ENCODE measurements at regions of chr19 and their contacts with region 1.

Region 1: GRCh38 chr19:2084993-2085720 is 11.0 kb downstream of the MOB3A start:
- DNase-seq: peak; percentile 68 to 97 (median 95)
- ATAC-seq: peak; percentile 86
- H3K4me3 ChIP-seq: peak overlapping the region; percentile 98
- H3K4me3 Mint-ChIP-seq: peak overlapping the region; percentile 87 to 99 (median 95)
- H3K27ac ChIP-seq: peak overlapping the region; percentile 99
- H3K27ac Mint-ChIP-seq: peak overlapping the region; percentile 92 to 99 (median 96)
- H3K4me1 ChIP-seq: peaks cover 65 to 72% of the 10 kb centered on the region in 2 donors
- H3K4me1 Mint-ChIP-seq: peaks cover 48 to 76% (median 68%) of the 10 kb centered on the region in 7 donors
- H3K27me3 ChIP-seq: no peaks in the 10 kb centered on the region
- H3K27me3 Mint-ChIP-seq: peaks cover 0 to 2% (median 0%) of the 10 kb centered on the region in 5 donors

Region 2: DNA sequence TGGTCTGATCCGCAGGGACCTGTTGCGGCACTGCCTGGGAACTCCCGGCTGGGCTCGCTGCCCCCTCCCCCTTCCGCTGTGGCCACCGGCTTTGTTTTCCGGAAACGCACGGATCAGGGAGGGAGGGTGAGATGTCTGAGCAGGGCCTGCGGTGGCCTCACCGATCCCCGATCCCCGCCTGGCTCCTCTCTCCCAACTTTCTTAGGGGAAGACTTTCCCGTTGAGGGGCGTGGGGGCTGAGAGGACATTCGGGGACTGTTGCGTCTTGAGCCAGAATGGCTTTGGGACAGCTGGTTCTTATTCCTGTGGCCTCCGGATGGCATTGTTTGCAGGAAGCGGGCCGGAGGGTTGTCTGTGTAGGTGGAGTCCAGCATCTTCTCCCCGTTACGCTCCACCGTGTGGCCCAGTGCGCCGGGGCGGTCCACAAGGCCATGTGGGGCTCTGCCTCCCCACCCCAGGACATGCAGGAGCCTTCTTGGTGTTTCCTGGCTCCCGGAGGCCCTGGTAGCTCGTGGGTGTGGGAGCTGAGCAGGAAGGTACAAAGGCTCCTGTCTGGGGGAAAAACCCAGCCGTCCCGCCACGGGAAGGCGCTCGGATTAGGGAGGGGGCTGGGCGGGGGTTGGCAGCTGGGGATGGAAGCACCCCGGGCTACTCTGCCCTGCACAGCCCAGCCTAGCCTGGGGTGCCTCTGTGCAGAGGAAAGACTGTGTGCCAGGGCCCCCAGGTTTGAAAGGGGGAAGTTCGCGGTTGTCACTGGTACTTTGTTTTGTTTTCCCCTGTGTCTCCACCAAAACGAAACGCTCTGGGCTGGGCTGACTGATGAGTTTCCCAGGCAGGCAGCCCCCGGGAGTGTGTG is 142.9 kb before region 1 on chr19:
- CTCF ChIA-PET with region 1: no interaction called
- POLR2A ChIA-PET with region 1: interaction called, 3 read pairs
- intact Hi-C with region 1: loop called in 1 of 2 experiments (anchors 1 kb)
- DNase-seq: peak; percentile 58 to 84 (median 78)
- ATAC-seq: peak; percentile 51
- H3K4me3 ChIP-seq: peak overlapping the region; percentile 94
- H3K4me3 Mint-ChIP-seq: peak overlapping the region; percentile 91 to 100 (median 96)
- H3K27ac ChIP-seq: peak overlapping the region; percentile 98
- H3K27ac Mint-ChIP-seq: peak overlapping the region; percentile 90 to 99 (median 97)
- H3K4me1 ChIP-seq: peaks cover 21 to 30% of the 10 kb centered on the region in 2 donors
- H3K4me1 Mint-ChIP-seq: peaks cover 22 to 44% (median 30%) of the 10 kb centered on the region in 7 donors
- H3K27me3 ChIP-seq: no peaks in the 10 kb centered on the region
- H3K27me3 Mint-ChIP-seq: peaks cover 0 to 2% (median 0%) of the 10 kb centered on the region in 5 donors

Region 3: GRCh38 chr19:1979670-1980069 is 105.5 kb before region 1 on chr19:
- CTCF ChIA-PET with region 1: no interaction called
- POLR2A ChIA-PET with region 1: no interaction called
- intact Hi-C with region 1: no loop called
- DNase-seq: no peak
- ATAC-seq: no peak
- H3K4me3 ChIP-seq: no peak overlapping the region
- H3K4me3 Mint-ChIP-seq: no peak overlapping the region
- H3K27ac ChIP-seq: no peak overlapping the region
- H3K27ac Mint-ChIP-seq: no peak overlapping the region
- H3K4me1 ChIP-seq: no peaks in the 10 kb centered on the region
- H3K4me1 Mint-ChIP-seq: peaks cover 0 to 4% (median 0%) of the 10 kb centered on the region in 7 donors
- H3K27me3 ChIP-seq: no peaks in the 10 kb centered on the region
- H3K27me3 Mint-ChIP-seq: no peaks in the 10 kb centered on the region

Region 4: DNA sequence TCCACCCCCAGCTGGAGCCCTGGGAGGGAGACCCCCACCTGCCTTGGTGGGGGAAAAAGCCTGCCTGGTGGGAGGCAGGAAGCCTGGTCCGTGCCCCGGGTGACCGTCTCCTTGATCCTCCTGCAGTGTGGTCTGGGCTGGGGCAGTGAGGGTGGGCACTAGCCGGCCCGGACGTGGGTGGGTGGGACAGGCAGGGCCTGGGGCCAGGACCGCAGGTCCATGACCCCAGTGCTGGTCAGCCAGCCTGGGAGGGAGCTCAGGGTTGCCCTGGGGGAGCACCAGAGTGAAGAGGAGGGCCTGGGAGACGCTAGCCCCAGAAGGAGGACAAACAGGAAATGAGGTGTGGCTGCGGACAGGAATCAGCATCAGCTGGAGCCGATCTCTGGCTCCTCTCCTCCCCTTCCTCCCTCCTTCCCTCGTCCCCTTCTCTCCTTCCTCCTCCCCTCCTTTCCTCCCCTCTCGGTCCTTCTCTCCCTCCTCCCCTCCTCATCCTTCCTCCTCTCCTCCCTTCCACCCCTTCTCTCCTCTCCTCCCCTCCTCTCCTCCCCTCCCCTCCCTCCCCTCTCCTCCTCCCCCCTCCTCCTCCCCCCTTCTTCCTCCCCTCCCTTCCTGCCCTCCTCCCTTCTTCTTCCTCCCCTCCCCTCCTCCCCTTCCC is 28.8 kb before region 1 on chr19:
- CTCF ChIA-PET with region 1: interaction called, 6 read pairs
- POLR2A ChIA-PET with region 1: interaction called, 39 read pairs
- intact Hi-C with region 1: loop called (anchors 1 kb)
- DNase-seq: no peak
- ATAC-seq: no peak
- H3K4me3 ChIP-seq: no peak overlapping the region
- H3K4me3 Mint-ChIP-seq: peak overlapping the region in 9 of 10 donors; percentile 49 to 83 (median 74)
- H3K27ac ChIP-seq: peak overlapping the region; percentile 99
- H3K27ac Mint-ChIP-seq: peak overlapping the region; percentile 25 to 94 (median 89)
- H3K4me1 ChIP-seq: peaks cover 45 to 67% of the 10 kb centered on the region in 2 donors
- H3K4me1 Mint-ChIP-seq: peaks cover 23 to 70% (median 40%) of the 10 kb centered on the region in 7 donors
- H3K27me3 ChIP-seq: no peaks in the 10 kb centered on the region
- H3K27me3 Mint-ChIP-seq: no peaks in the 10 kb centered on the region

Region 5: GRCh38 chr19:2061495-2062381 is 23.4 kb before region 1 on chr19:
- CTCF ChIA-PET with region 1: interaction called, 3 read pairs
- POLR2A ChIA-PET with region 1: interaction called, 18 read pairs
- intact Hi-C with region 1: loop called (anchors 1 kb)
- DNase-seq: peak; percentile 99 to 100 (median 100)
- ATAC-seq: peak; percentile 94
- H3K4me3 ChIP-seq: peak overlapping the region; percentile 72
- H3K4me3 Mint-ChIP-seq: peak overlapping the region; percentile 91 to 97 (median 94)
- H3K27ac ChIP-seq: peak overlapping the region; percentile 99
- H3K27ac Mint-ChIP-seq: peak overlapping the region; percentile 85 to 99 (median 97)
- H3K4me1 ChIP-seq: peaks cover 32 to 49% of the 10 kb centered on the region in 2 donors
- H3K4me1 Mint-ChIP-seq: peaks cover 20 to 60% (median 24%) of the 10 kb centered on the region in 7 donors
- H3K27me3 ChIP-seq: no peaks in the 10 kb centered on the region
- H3K27me3 Mint-ChIP-seq: no peaks in the 10 kb centered on the region

Region 6: GRCh38 chr19:2070436-2070827 is 14.7 kb before region 1 on chr19:
- CTCF ChIA-PET with region 1: interaction called, 5 read pairs
- POLR2A ChIA-PET with region 1: interaction called, 13 read pairs
- intact Hi-C with region 1: loop called in 1 of 2 experiments (anchors 1 kb)
- DNase-seq: no peak
- ATAC-seq: no peak
- H3K4me3 ChIP-seq: no peak overlapping the region
- H3K4me3 Mint-ChIP-seq: no peak overlapping the region
- H3K27ac ChIP-seq: peak overlapping the region; percentile 53
- H3K27ac Mint-ChIP-seq: peak overlapping the region in 6 of 9 donors; percentile 59 to 88 (median 80)
- H3K4me1 ChIP-seq: peaks cover 0 to 10% of the 10 kb centered on the region in 2 donors
- H3K4me1 Mint-ChIP-seq: peaks cover 13 to 38% (median 22%) of the 10 kb centered on the region in 7 donors
- H3K27me3 ChIP-seq: no peaks in the 10 kb centered on the region
- H3K27me3 Mint-ChIP-seq: no peaks in the 10 kb centered on the region

Region 7: DNA sequence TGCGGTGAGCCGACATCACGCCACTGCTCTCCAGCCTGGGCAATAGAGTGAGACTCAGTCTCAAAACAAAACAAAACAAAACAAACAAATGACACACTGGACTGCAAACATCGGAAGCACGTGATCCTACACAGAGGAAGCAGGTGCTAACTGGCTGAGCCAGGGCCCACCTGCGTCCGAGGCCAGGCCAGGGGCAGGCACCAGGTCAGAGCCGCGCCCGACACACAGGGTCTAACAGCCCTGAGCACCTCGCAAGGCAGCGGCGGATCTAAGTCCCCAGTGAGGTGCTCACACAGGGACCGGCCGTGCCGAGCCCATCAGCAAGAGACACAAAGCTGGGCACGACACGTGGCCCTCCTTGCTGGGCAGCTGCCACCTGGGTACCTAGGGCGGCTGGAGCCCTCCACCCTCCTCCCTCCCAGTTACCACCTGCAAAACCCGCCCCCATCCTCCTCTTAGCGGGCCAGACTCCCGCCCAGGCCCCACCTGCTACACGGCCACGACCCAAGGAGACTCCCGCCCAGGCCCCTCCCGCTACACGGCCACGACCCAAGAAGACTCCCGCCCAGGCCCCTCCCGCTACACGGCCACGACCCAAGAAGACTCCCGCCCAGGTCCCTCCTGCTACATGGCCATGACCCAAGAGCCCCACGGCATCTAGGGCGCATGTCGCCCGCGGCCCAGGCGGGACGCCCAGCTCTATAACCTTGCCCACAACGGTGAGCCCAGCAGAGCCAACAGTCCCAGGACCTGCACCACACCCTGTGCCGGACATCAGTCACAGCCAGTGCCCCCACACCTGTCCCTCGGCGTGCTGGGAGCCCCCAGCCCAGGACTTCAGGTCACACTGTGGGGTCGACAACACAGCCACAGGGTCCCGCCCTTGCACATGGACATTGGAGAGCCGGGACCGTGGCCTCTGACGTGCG is 50.6 kb after region 1 on chr19:
- CTCF ChIA-PET with region 1: no interaction called
- POLR2A ChIA-PET with region 1: no interaction called
- intact Hi-C with region 1: no loop called
- DNase-seq: no peak
- ATAC-seq: no peak
- H3K4me3 ChIP-seq: no peak overlapping the region
- H3K4me3 Mint-ChIP-seq: no peak overlapping the region
- H3K27ac ChIP-seq: no peak overlapping the region
- H3K27ac Mint-ChIP-seq: no peak overlapping the region
- H3K4me1 ChIP-seq: no peaks in the 10 kb centered on the region
- H3K4me1 Mint-ChIP-seq: peaks cover 0 to 9% (median 0%) of the 10 kb centered on the region in 7 donors
- H3K27me3 ChIP-seq: no peaks in the 10 kb centered on the region
- H3K27me3 Mint-ChIP-seq: no peaks in the 10 kb centered on the region

Region 8: GRCh38 chr19:2817313-2817712 is 732.2 kb after region 1 on chr19:
- CTCF ChIA-PET with region 1: no interaction called
- POLR2A ChIA-PET with region 1: no interaction called
- intact Hi-C with region 1: no loop called
- DNase-seq: no peak
- ATAC-seq: no peak
- H3K4me3 ChIP-seq: no peak overlapping the region
- H3K4me3 Mint-ChIP-seq: peak overlapping the region in 2 of 10 donors; percentile 20 to 64
- H3K27ac ChIP-seq: no peak overlapping the region
- H3K27ac Mint-ChIP-seq: peak overlapping the region in 1 of 9 donors; percentile 49
- H3K4me1 ChIP-seq: peaks cover 3 to 4% of the 10 kb centered on the region in 2 donors
- H3K4me1 Mint-ChIP-seq: peaks cover 0 to 18% (median 6%) of the 10 kb centered on the region in 7 donors
- H3K27me3 ChIP-seq: no peaks in the 10 kb centered on the region
- H3K27me3 Mint-ChIP-seq: no peaks in the 10 kb centered on the region